CD8-positive, alpha-beta T cell (primary cell): ENCODE measurements at regions of chr11 and their contacts with region 1.

Region 1: GRCh38 chr11:92436034-92436920 is 211.7 kb downstream of the FAT3 start:
- DNase-seq: no peak
- ATAC-seq: no peak
- H3K4me3 ChIP-seq: no peak overlapping the region
- H3K4me3 Mint-ChIP-seq: no peak overlapping the region
- H3K27ac ChIP-seq: no peak overlapping the region
- H3K27ac Mint-ChIP-seq: no peak overlapping the region
- H3K4me1 ChIP-seq: no peaks in the 10 kb centered on the region
- H3K4me1 Mint-ChIP-seq: no peaks in the 10 kb centered on the region
- H3K27me3 ChIP-seq: no peaks in the 10 kb centered on the region
- H3K27me3 Mint-ChIP-seq: no peaks in the 10 kb centered on the region
- CTCF ChIP-seq: no peak

Region 2: GRCh38 chr11:92528001-92528400 is 91.7 kb after region 1 on chr11:
- CTCF ChIA-PET with region 1: no interaction called
- POLR2A ChIA-PET with region 1: no interaction called
- intact Hi-C with region 1: no loop called
- DNase-seq: no peak
- ATAC-seq: no peak
- H3K4me3 ChIP-seq: no peak overlapping the region
- H3K4me3 Mint-ChIP-seq: no peak overlapping the region
- H3K27ac ChIP-seq: no peak overlapping the region
- H3K27ac Mint-ChIP-seq: no peak overlapping the region
- H3K4me1 ChIP-seq: no peaks in the 10 kb centered on the region
- H3K4me1 Mint-ChIP-seq: no peaks in the 10 kb centered on the region
- H3K27me3 ChIP-seq: no peaks in the 10 kb centered on the region
- H3K27me3 Mint-ChIP-seq: no peaks in the 10 kb centered on the region
- CTCF ChIP-seq: no peak

Region 3: DNA sequence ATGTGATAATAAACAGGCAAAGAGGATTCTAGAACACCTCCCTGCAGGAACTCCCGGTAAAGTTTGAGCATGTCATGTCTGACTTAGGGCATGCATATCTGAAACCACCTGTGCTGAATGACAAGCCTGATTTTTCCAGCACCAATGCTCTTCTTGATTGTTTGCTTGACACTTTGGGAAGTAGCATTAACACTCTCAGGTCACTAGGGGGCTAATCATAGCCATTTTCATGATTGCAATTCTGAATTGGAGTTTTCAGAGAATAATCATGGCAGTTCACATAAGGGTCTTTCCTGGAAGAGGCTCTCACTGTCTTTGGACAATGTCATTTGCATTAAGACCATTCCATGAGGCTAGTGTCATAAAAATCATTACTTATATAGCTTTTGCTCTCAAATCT is 298.8 kb after region 1 on chr11:
- CTCF ChIA-PET with region 1: no interaction called
- POLR2A ChIA-PET with region 1: no interaction called
- intact Hi-C with region 1: loop called in 1 of 2 experiments (anchors 5 kb)
- DNase-seq: no peak
- ATAC-seq: no peak
- H3K4me3 ChIP-seq: no peak overlapping the region
- H3K4me3 Mint-ChIP-seq: no peak overlapping the region
- H3K27ac ChIP-seq: no peak overlapping the region
- H3K27ac Mint-ChIP-seq: no peak overlapping the region
- H3K4me1 ChIP-seq: no peaks in the 10 kb centered on the region
- H3K4me1 Mint-ChIP-seq: no peaks in the 10 kb centered on the region
- H3K27me3 ChIP-seq: no peaks in the 10 kb centered on the region
- H3K27me3 Mint-ChIP-seq: no peaks in the 10 kb centered on the region
- CTCF ChIP-seq: no peak

Region 4: GRCh38 chr11:93000511-93001476 is 564.5 kb after region 1 on chr11:
- CTCF ChIA-PET with region 1: no interaction called
- POLR2A ChIA-PET with region 1: no interaction called
- intact Hi-C with region 1: no loop called
- DNase-seq: no peak
- ATAC-seq: no peak
- H3K4me3 ChIP-seq: no peak overlapping the region
- H3K4me3 Mint-ChIP-seq: no peak overlapping the region
- H3K27ac ChIP-seq: no peak overlapping the region
- H3K27ac Mint-ChIP-seq: no peak overlapping the region
- H3K4me1 ChIP-seq: no peaks in the 10 kb centered on the region
- H3K4me1 Mint-ChIP-seq: no peaks in the 10 kb centered on the region
- H3K27me3 ChIP-seq: no peaks in the 10 kb centered on the region
- H3K27me3 Mint-ChIP-seq: peaks cover 2% of the 10 kb centered on the region
- CTCF ChIP-seq: no peak